ENCODE measurements at regions of chr15 and their contacts with region 1.

Region 1: DNA sequence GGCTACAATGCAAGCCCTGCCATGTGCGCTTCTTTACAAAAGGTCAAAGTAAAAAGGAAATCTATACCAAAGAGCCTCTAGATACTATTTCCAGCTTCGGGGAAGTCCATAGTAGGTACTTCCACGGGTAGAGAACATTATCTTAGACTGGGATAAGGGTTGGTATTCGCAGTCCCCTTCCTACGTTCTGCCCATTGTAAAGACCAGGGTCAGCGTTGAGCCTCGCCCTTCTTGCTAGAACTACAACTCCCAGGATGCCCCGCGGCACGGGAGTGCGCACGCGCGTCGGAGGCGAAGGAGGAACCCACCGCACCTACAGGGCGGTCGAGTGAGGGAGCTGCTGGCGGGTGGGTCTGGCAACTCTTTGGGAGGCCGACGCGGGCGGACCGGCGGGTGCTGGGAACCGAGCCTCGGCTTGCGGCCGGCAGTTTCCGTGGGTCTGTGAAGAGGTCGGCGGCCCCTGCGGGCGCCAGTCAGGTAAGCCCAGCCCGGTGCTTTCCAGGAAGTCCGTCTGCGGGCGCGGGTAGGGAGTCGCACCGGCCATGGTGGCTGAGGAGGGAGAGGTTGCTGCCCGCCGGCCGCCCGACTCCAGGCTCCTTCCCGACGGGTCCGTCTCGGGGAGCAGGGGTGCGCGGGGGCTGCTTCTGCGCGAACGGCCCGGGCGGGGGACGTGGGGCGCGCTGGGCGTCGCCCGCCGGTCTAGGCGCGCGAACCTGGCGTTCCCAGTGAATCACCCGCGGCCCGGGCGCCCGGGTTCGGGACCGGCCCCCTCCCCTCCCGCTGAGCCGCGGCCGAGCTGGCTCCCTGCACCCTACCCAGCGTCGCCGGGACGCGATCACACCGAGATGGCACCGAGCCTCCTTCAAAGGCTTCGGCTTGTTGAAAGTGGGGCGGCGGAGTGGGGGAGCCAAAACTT is at the start of gene TMOD3:
- DNase-seq: peak; percentile 79 to 94 (median 84)
- ATAC-seq: peak; percentile 94
- H3K4me3 ChIP-seq: peak within 1 kb of the TSS; percentile 93
- H3K4me3 Mint-ChIP-seq: peak within 1 kb of the TSS; percentile 94 to 99 (median 98)
- H3K27ac ChIP-seq: peak within 1 kb of the TSS; percentile 85
- H3K27ac Mint-ChIP-seq: peak within 1 kb of the TSS; percentile 87 to 97 (median 94)
- H3K4me1 ChIP-seq: peaks cover 21 to 26% of the 10 kb centered on the region in 2 donors
- H3K4me1 Mint-ChIP-seq: peaks cover 30 to 51% (median 41%) of the 10 kb centered on the region in 7 donors
- H3K27me3 ChIP-seq: no peaks in the 10 kb centered on the region
- H3K27me3 Mint-ChIP-seq: peaks cover 0 to 8% (median 0%) of the 10 kb centered on the region in 5 donors
- total RNA-seq, gene TMOD3: 46.5 to 75.9 (median 50.4) TPM

Region 2: GRCh38 chr15:51724673-51725072 is 104.9 kb before region 1 on chr15:
- CTCF ChIA-PET with region 1: no interaction called
- POLR2A ChIA-PET with region 1: no interaction called
- intact Hi-C with region 1: no loop called
- DNase-seq: no peak
- ATAC-seq: no peak
- H3K4me3 ChIP-seq: no peak overlapping the region
- H3K4me3 Mint-ChIP-seq: peak overlapping the region in 7 of 10 donors; percentile 3 to 51 (median 16)
- H3K27ac ChIP-seq: no peak overlapping the region
- H3K27ac Mint-ChIP-seq: peak overlapping the region in 8 of 9 donors; percentile 5 to 83 (median 50)
- H3K4me1 ChIP-seq: peaks cover 9 to 24% of the 10 kb centered on the region in 2 donors
- H3K4me1 Mint-ChIP-seq: peaks cover 29 to 70% (median 59%) of the 10 kb centered on the region in 7 donors
- H3K27me3 ChIP-seq: no peaks in the 10 kb centered on the region
- H3K27me3 Mint-ChIP-seq: no peaks in the 10 kb centered on the region

Region 3: GRCh38 chr15:51750792-51751685 is 78.6 kb before region 1 on chr15 and contains the start of gene TMOD2:
- CTCF ChIA-PET with region 1: no interaction called
- POLR2A ChIA-PET with region 1: no interaction called
- intact Hi-C with region 1: loop called in 1 of 2 experiments (anchors 1 kb)
- DNase-seq: peak in 8 of 9 donors; percentile 40 to 66 (median 46)
- ATAC-seq: peak; percentile 90
- H3K4me3 ChIP-seq: peak within 1 kb of the TSS; percentile 55
- H3K4me3 Mint-ChIP-seq: peak within 1 kb of the TSS; percentile 84 to 91 (median 87)
- H3K27ac ChIP-seq: no peak within 1 kb of the TSS
- H3K27ac Mint-ChIP-seq: peak within 1 kb of the TSS in 7 of 9 donors; percentile 32 to 84 (median 80)
- H3K4me1 ChIP-seq: peaks cover 0 to 10% of the 10 kb centered on the region in 2 donors
- H3K4me1 Mint-ChIP-seq: peaks cover 24 to 51% (median 42%) of the 10 kb centered on the region in 7 donors
- H3K27me3 ChIP-seq: no peaks in the 10 kb centered on the region
- H3K27me3 Mint-ChIP-seq: peaks cover 0 to 60% (median 4%) of the 10 kb centered on the region in 5 donors
- total RNA-seq, gene TMOD2: 9.5 to 17.1 (median 13.4) TPM

Region 4: GRCh38 chr15:51869070-51869425 is 39.4 kb after region 1 on chr15:
- CTCF ChIA-PET with region 1: no interaction called
- POLR2A ChIA-PET with region 1: no interaction called
- intact Hi-C with region 1: loop called in 1 of 2 experiments (anchors 5 kb)
- DNase-seq: no peak
- ATAC-seq: no peak
- H3K4me3 ChIP-seq: no peak overlapping the region
- H3K4me3 Mint-ChIP-seq: no peak overlapping the region
- H3K27ac ChIP-seq: no peak overlapping the region
- H3K27ac Mint-ChIP-seq: peak overlapping the region in 3 of 9 donors; percentile 21 to 66 (median 26)
- H3K4me1 ChIP-seq: no peaks in the 10 kb centered on the region
- H3K4me1 Mint-ChIP-seq: peaks cover 6 to 19% (median 9%) of the 10 kb centered on the region in 7 donors
- H3K27me3 ChIP-seq: no peaks in the 10 kb centered on the region
- H3K27me3 Mint-ChIP-seq: no peaks in the 10 kb centered on the region

Region 5: DNA sequence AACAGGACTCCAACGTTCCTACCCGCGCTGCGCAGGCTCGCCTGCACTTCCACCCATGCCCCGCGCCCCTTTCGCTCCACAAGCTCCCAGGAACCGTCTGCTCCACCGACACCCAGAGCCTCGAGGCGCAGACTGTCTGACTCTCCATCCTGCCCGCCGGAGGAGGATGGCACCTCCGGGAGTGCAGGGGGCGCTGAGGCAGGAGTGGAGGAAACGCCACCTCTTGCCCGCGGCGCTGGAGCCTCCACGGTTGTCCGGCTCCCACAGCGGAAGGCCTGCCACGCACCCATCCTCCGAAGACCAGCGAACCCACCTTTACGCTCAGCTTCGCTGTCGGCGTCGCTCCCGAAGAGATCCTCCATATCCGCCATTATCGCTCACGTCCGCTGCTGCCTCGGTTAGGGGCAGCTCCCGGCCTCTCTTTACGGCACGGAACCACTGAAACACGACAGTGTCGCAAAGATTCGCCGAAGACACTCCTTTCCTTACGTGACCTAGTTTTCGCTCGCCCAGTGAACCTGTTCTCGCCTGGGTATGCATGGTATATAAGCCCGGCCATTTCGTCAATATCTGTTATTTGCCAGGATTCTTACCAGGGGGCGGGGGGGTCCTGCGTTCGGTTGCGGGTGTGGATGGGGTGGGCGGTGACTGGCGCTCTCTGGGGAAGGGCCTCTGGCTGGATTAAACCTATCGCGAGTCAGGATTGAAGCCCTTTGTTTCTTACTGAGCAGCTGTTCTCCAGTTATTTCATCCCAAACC is 141.9 kb after region 1 on chr15 and contains the start of gene LEO1:
- CTCF ChIA-PET with region 1: no interaction called
- POLR2A ChIA-PET with region 1: no interaction called
- intact Hi-C with region 1: loop called (anchors 1 to 5 kb)
- DNase-seq: peak; percentile 59 to 94 (median 91)
- ATAC-seq: peak; percentile 98
- H3K4me3 ChIP-seq: peak within 1 kb of the TSS; percentile 95
- H3K4me3 Mint-ChIP-seq: peak within 1 kb of the TSS; percentile 97 to 99 (median 98)
- H3K27ac ChIP-seq: peak within 1 kb of the TSS; percentile 79
- H3K27ac Mint-ChIP-seq: peak within 1 kb of the TSS; percentile 94 to 100 (median 98)
- H3K4me1 ChIP-seq: peaks cover 11 to 13% of the 10 kb centered on the region in 2 donors
- H3K4me1 Mint-ChIP-seq: peaks cover 10 to 33% (median 26%) of the 10 kb centered on the region in 7 donors
- H3K27me3 ChIP-seq: no peaks in the 10 kb centered on the region
- H3K27me3 Mint-ChIP-seq: peaks cover 0 to 3% (median 0%) of the 10 kb centered on the region in 5 donors
- total RNA-seq, gene LEO1: 9.2 to 30.1 (median 19.3) TPM

Region 6: GRCh38 chr15:52039925-52040781 is 210.5 kb after region 1 on chr15:
- CTCF ChIA-PET with region 1: no interaction called
- POLR2A ChIA-PET with region 1: no interaction called
- intact Hi-C with region 1: loop called in 1 of 2 experiments (anchors 10 kb)
- DNase-seq: no peak
- ATAC-seq: peak; percentile 51
- H3K4me3 ChIP-seq: no peak overlapping the region
- H3K4me3 Mint-ChIP-seq: peak overlapping the region in 7 of 10 donors; percentile 4 to 45 (median 26)
- H3K27ac ChIP-seq: peak overlapping the region; percentile 32
- H3K27ac Mint-ChIP-seq: peak overlapping the region; percentile 0 to 91 (median 42)
- H3K4me1 ChIP-seq: peaks cover 4 to 16% of the 10 kb centered on the region in 2 donors
- H3K4me1 Mint-ChIP-seq: peaks cover 34 to 87% (median 64%) of the 10 kb centered on the region in 7 donors
- H3K27me3 ChIP-seq: no peaks in the 10 kb centered on the region
- H3K27me3 Mint-ChIP-seq: no peaks in the 10 kb centered on the region